Activated CD4-positive, alpha-beta T cell treated with anti-CD3 and anti-CD28 coated beads for 36 hours (primary cell): ENCODE measurements at regions of chr6 and their contacts with region 1.

Region 1: GRCh38 chr6:155747491-155747890 is 291.9 kb upstream of the NOX3 start:
- DNase-seq: no peak
- ATAC-seq: no peak
- H3K4me3 Mint-ChIP-seq: no peak overlapping the region
- H3K27ac Mint-ChIP-seq: no peak overlapping the region
- H3K4me1 Mint-ChIP-seq: no peaks in the 10 kb centered on the region
- H3K27me3 Mint-ChIP-seq: no peaks in the 10 kb centered on the region

Region 2: DNA sequence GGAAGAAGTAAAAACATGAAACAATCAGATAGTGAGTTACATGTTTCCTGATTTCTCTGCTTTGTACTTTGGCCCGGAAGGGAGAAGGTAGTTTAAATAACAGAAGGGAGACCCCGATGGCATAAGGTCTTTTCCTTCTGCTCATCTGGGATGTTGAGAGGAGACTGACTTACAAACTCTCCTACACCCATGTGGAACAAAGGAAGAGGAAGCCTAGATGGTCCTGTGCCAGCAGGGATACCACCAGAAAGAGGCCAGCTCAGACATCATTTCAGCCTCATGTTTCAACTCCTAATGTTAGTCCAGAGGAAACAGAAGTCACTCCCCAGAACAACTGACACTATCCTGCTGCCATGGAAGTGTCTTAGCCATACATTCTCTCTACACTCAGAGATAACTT is 41.1 kb before region 1 on chr6:
- CTCF ChIA-PET with region 1: no interaction called
- POLR2A ChIA-PET with region 1: no interaction called
- intact Hi-C with region 1: no loop called
- DNase-seq: no peak
- ATAC-seq: no peak
- H3K4me3 Mint-ChIP-seq: no peak overlapping the region
- H3K27ac Mint-ChIP-seq: no peak overlapping the region
- H3K4me1 Mint-ChIP-seq: no peaks in the 10 kb centered on the region
- H3K27me3 Mint-ChIP-seq: peaks cover 2% of the 10 kb centered on the region

Region 3: DNA sequence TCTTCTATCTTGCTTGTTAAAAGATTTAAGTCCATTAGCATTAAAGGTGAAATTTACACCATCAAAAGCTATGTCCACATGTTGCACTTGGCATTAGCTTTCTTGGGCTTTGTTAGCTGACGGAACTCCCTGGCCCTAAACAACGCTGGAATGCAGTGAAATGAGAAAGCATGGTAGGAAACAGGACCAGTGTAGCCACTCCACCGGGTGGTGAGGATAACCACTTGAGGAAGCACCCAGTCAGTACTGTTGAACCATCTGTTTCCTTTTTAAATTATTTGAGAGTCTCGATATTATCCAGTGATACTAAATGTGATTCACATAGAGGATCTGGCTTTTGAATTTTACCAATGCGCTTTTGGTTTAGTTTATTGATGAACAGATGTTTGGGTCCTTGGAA is 83.0 kb after region 1 on chr6:
- CTCF ChIA-PET with region 1: no interaction called
- POLR2A ChIA-PET with region 1: no interaction called
- intact Hi-C with region 1: loop called in 1 of 2 experiments (anchors 2 kb)
- DNase-seq: no peak
- ATAC-seq: no peak
- H3K4me3 Mint-ChIP-seq: no peak overlapping the region
- H3K27ac Mint-ChIP-seq: no peak overlapping the region
- H3K4me1 Mint-ChIP-seq: no peaks in the 10 kb centered on the region
- H3K27me3 Mint-ChIP-seq: no peaks in the 10 kb centered on the region